IMR-90 (cell line): ENCODE measurements at regions of chr2 and their contacts with region 1.

Region 1: GRCh38 chr2:97848306-97848705 is 134.9 kb downstream of the ZAP70 start:
- DNase-seq: no peak
- ATAC-seq: no peak
- H3K4me3 ChIP-seq: no peak overlapping the region
- H3K27ac ChIP-seq: no peak overlapping the region
- H3K4me1 ChIP-seq: no peaks in the 10 kb centered on the region; the same call in 1 of the 2 replicates
- H3K27me3 ChIP-seq: no peaks in the 10 kb centered on the region
- CTCF ChIP-seq: no peak
- POLR2A ChIP-seq: no peak
- RAD21 ChIP-seq: no peak

Region 2: GRCh38 chr2:97858442-97858841 is 10.1 kb after region 1 on chr2:
- CTCF ChIA-PET with region 1: no interaction called
- POLR2A ChIA-PET with region 1: no interaction called
- dilution Hi-C with region 1: no loop called
- in situ Hi-C with region 1: no loop called
- intact Hi-C with region 1: loop called (anchors 1 kb)
- DNase-seq: no peak
- ATAC-seq: no peak
- H3K4me3 ChIP-seq: no peak overlapping the region
- H3K27ac ChIP-seq: no peak overlapping the region
- H3K4me1 ChIP-seq: no peaks in the 10 kb centered on the region
- H3K27me3 ChIP-seq: no peaks in the 10 kb centered on the region
- CTCF ChIP-seq: no peak
- POLR2A ChIP-seq: no peak
- RAD21 ChIP-seq: no peak

Region 3: GRCh38 chr2:97931118-97931857 is 83.0 kb after region 1 on chr2:
- CTCF ChIA-PET with region 1: no interaction called
- POLR2A ChIA-PET with region 1: no interaction called
- dilution Hi-C with region 1: no loop called
- in situ Hi-C with region 1: no loop called
- intact Hi-C with region 1: no loop called
- DNase-seq: no peak
- ATAC-seq: no peak
- H3K4me3 ChIP-seq: no peak overlapping the region
- H3K27ac ChIP-seq: no peak overlapping the region
- H3K4me1 ChIP-seq: peaks cover 5% of the 10 kb centered on the region
- H3K27me3 ChIP-seq: no peaks in the 10 kb centered on the region
- CTCF ChIP-seq: no peak
- POLR2A ChIP-seq: no peak
- RAD21 ChIP-seq: no peak

Region 4: GRCh38 chr2:97948926-97949325 is 100.6 kb after region 1 on chr2:
- CTCF ChIA-PET with region 1: no interaction called
- POLR2A ChIA-PET with region 1: no interaction called
- dilution Hi-C with region 1: no loop called
- in situ Hi-C with region 1: no loop called
- intact Hi-C with region 1: no loop called
- DNase-seq: no peak
- ATAC-seq: no peak
- H3K4me3 ChIP-seq: no peak overlapping the region
- H3K27ac ChIP-seq: no peak overlapping the region
- H3K4me1 ChIP-seq: peaks cover 11% of the 10 kb centered on the region
- H3K27me3 ChIP-seq: no peaks in the 10 kb centered on the region
- CTCF ChIP-seq: no peak
- POLR2A ChIP-seq: no peak
- RAD21 ChIP-seq: no peak